HepG2 (cell line): ENCODE measurements at regions of chr19 and their contacts with region 1.

Region 1: GRCh38 chr19:12777217-12778016 is 2.1 kb upstream of the HOOK2 start:
- DNase-seq: peak; percentile 50
- ATAC-seq: peak; percentile 66
- H3K4me3 ChIP-seq: peak overlapping the region; percentile 76 to 80 (median 79)
- H3K27ac ChIP-seq: no peak overlapping the region
- H3K4me1 ChIP-seq: peaks cover 43% of the 10 kb centered on the region
- H3K27me3 ChIP-seq: no peaks in the 10 kb centered on the region; a peak in 1 of 5 replicates
- CTCF ChIP-seq: peak; percentile 92
- EP300 ChIP-seq: no peak
- POLR2A ChIP-seq: no peak
- RAD21 ChIP-seq: peak; percentile 89

Region 2: DNA sequence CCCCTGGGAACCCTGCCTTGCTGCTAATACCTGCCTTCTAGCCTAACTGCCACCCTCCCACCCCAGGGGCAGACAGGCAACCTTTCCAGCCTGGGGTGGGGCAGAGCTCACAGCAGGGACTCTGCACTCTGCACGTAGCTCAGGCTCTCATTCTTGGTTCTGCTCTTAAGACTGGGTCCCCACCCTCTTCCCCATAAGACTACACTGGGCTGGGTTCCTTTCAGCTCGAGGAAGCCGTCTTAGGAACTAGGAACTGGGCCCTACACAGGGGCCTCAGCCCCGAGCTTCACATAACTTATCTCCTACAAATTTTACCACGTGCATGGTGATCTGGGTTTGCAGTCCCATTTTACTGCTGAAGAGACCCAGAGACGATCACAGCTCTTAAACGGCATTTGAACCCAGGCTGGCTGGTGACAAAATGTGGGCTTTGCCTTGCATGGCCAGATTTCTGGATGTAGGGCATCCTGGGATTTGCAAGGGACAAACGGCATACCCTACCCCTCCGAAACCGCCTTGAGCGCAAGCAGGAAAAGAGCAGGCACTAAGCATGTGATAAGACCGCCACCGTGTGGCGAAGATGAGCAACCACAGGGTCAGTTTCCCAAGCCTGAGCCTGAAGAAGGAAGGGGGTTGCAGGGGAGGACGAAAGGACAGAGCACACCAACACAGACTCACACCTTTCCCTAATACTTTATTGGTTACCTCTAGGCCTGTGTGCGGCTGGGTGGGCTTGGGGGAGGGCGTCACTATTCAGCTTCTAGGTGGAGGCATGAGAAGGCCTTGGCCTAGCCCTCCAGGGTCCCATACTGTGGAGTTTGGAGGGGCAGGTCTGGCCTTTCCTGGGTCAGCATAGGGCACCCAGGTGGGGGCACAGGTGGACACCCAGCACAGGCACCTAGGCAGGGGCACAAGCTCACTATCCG is 19.0 kb after region 1 on chr19:
- CTCF ChIA-PET with region 1: interaction called, 54 read pairs
- POLR2A ChIA-PET with region 1: interaction called, 124 read pairs
- in situ Hi-C with region 1: no loop called
- intact Hi-C with region 1: loop called (anchors 1 kb)
- DNase-seq: peak; percentile 68
- ATAC-seq: peak; percentile 28
- H3K4me3 ChIP-seq: peak overlapping the region in 1 of 3 experiments; percentile 24; a peak in 2 of 6 replicates
- H3K27ac ChIP-seq: no peak overlapping the region
- H3K4me1 ChIP-seq: peaks cover 38% of the 10 kb centered on the region
- H3K27me3 ChIP-seq: no peaks in the 10 kb centered on the region; a peak in 1 of 5 replicates
- CTCF ChIP-seq: peak; percentile 98
- EP300 ChIP-seq: no peak
- POLR2A ChIP-seq: 0 out of 4 replicates have a peak, but pooled peaks have one; percentile 22 to 48
- RAD21 ChIP-seq: peak; percentile 96

Region 3: DNA sequence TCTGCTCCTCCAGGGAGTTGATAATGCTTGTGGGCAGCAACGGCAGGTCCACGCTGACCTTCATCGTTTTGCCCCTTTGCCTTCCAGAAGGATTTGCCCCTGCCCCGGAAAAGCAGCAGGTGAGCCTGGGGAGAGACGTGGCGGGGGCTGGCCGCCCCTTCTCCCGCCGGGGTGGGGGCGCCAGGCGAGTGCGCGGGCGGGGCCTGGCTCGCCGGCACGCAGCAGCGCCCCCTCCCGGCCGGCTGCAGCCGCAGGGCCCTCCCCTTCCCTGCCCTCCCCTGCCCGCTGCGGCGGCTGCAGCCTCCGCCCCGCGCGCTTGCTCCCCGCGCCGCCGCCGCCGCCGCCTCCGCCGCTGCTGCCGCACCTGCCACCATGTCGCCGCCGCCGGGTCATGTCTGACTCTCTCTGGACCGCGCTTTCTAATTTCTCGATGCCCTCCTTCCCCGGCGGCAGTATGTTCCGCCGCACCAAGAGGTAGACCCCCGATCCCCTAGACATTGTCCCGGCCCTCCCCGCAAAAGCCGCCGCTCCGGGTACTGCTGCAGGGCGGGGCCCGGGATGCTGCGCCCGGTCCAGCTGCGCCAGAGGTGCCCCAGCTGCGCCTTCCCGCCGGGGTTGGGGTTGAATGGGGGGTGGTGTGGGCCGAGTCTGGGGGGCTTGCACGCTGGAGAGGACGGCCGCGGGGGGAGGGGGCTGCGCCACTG is 60.9 kb after region 1 on chr19 and contains the start of gene MAST1:
- CTCF ChIA-PET with region 1: no interaction called
- POLR2A ChIA-PET with region 1: no interaction called
- in situ Hi-C with region 1: loop called (anchors 5 kb)
- intact Hi-C with region 1: no loop called
- DNase-seq: no peak
- ATAC-seq: peak; percentile 66
- H3K4me3 ChIP-seq: peak within 1 kb of the TSS; percentile 49 to 75 (median 70); a peak in 5 of 6 replicates
- H3K27ac ChIP-seq: no peak within 1 kb of the TSS
- H3K4me1 ChIP-seq: peaks cover 43% of the 10 kb centered on the region
- H3K27me3 ChIP-seq: peaks cover 0 to 15% of the 10 kb centered on the region in 2 experiments; a peak in 2 of 5 replicates
- CTCF ChIP-seq: peak; percentile 56; the same call in 1 of the 2 replicates
- EP300 ChIP-seq: no peak
- POLR2A ChIP-seq: no peak
- RAD21 ChIP-seq: peak; percentile 31
- total RNA-seq, gene MAST1: 0.27 and 0.73 TPM in 2 replicates

Region 4: DNA sequence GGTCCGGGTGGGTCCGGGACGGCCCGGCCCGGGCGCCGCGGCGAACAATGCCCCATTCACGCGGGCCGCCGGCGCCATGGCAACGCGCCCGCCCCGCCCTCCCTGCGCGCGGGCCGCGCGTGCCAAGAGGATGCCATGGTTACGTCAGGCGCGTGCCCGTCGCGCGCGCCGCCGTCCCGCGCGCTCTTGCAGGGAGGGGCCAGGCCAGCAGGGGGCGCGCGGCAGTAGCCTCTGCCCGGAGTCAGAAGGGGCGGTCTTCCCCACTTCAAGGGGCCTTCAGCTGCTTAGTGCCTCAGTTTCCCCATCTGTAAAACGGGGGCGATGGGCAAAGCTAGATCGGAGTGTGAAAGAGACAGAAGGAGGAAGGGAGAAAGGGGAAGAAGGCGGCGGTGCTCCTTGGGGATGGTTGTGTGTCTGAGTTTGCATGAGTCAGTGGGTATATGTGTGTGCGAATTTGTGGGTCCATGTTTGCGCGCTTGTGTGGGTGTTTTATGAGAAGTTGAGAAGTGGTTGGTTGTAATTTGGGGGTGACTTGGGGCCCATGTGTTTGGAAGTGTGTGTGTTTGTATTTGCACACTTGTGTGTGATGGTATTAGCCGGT is 206.2 kb after region 1 on chr19:
- CTCF ChIA-PET with region 1: no interaction called
- POLR2A ChIA-PET with region 1: no interaction called
- in situ Hi-C with region 1: no loop called
- intact Hi-C with region 1: no loop called
- DNase-seq: peak; percentile 53
- ATAC-seq: peak; percentile 8; the same call in 1 of the 3 replicates
- H3K4me3 ChIP-seq: peak overlapping the region in 2 of 3 experiments; percentile 38 to 47; a peak in 1 of 6 replicates
- H3K27ac ChIP-seq: no peak overlapping the region
- H3K4me1 ChIP-seq: peaks cover 60% of the 10 kb centered on the region
- H3K27me3 ChIP-seq: peaks cover 0 to 5% of the 10 kb centered on the region in 2 experiments; a peak in 1 of 5 replicates
- CTCF ChIP-seq: peak; percentile 91
- EP300 ChIP-seq: peak; percentile 35 to 41; a peak in 2 of 4 replicates
- POLR2A ChIP-seq: no peak
- RAD21 ChIP-seq: peak; percentile 97

Region 5: DNA sequence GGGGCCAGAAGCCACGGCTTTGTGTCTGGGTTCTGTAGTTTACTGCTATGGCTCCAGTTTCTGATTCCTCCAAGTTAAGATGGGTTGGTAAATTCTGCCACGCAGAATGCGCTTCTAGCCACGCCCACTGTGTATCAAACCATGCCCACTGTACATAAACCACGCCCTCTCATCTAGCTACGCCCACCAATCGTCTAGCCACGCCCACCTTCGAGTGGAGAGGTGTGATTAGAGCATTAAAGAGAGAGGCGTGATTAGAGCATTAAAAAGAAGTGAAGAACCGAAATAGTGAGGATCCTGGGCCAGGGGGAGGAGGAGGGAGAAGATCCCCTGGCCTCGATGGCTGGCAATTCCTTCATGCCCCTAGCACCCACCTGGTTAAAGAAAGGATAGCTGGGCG is 1560.1 kb after region 1 on chr19:
- CTCF ChIA-PET with region 1: no interaction called
- POLR2A ChIA-PET with region 1: no interaction called
- in situ Hi-C with region 1: no loop called
- intact Hi-C with region 1: no loop called
- DNase-seq: no peak
- ATAC-seq: no peak
- H3K4me3 ChIP-seq: no peak overlapping the region
- H3K27ac ChIP-seq: no peak overlapping the region
- H3K4me1 ChIP-seq: no peaks in the 10 kb centered on the region
- H3K27me3 ChIP-seq: no peaks in the 10 kb centered on the region
- CTCF ChIP-seq: no peak
- EP300 ChIP-seq: no peak
- POLR2A ChIP-seq: no peak
- RAD21 ChIP-seq: no peak